Dendritic cell treated with granulocyte-macrophage colony-stimulating factor and Interleukin-4, amounts not matched to agents 40 ng/mL and 50 ng/mL, for 4 days (primary cell): ENCODE measurements at regions of chr11 and their contacts with region 1.

Region 1: DNA sequence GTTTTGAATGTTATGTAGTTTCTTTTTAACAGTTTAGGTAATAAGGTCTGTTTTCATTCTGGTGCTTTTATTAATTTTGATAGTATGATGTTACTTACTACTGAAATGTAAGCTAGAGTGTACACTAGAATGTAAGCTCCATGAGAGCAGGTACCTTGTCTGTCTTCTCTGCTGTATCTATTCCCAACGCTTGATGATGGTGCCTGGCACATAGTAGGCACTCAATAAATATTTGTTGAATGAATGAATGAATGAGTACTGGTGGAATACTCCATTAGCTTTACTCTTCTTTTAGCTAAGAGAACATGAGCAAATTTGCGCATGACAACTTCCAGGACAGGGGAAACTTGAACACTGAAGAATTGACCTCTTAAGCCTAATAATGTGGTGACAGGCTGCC is 6.6 kb upstream of the NAT10 start:
- H3K4me3 Mint-ChIP-seq: no peak overlapping the region
- H3K27ac Mint-ChIP-seq: no peak overlapping the region
- H3K4me1 Mint-ChIP-seq: peaks cover under 1% of the 10 kb centered on the region
- H3K27me3 Mint-ChIP-seq: no peaks in the 10 kb centered on the region

Region 2: GRCh38 chr11:34068111-34068510 is 30.7 kb before region 1 on chr11:
- intact Hi-C with region 1: loop called (anchors 5 kb)
- H3K4me3 Mint-ChIP-seq: no peak overlapping the region
- H3K27ac Mint-ChIP-seq: peak overlapping the region; percentile 65
- H3K4me1 Mint-ChIP-seq: peaks cover 30% of the 10 kb centered on the region
- H3K27me3 Mint-ChIP-seq: no peaks in the 10 kb centered on the region

Region 3: GRCh38 chr11:34111722-34112270 is 13.0 kb after region 1 on chr11:
- intact Hi-C with region 1: loop called (anchors 1 kb)
- H3K4me3 Mint-ChIP-seq: no peak overlapping the region
- H3K27ac Mint-ChIP-seq: no peak overlapping the region
- H3K4me1 Mint-ChIP-seq: peaks cover 9% of the 10 kb centered on the region
- H3K27me3 Mint-ChIP-seq: no peaks in the 10 kb centered on the region

Region 4: DNA sequence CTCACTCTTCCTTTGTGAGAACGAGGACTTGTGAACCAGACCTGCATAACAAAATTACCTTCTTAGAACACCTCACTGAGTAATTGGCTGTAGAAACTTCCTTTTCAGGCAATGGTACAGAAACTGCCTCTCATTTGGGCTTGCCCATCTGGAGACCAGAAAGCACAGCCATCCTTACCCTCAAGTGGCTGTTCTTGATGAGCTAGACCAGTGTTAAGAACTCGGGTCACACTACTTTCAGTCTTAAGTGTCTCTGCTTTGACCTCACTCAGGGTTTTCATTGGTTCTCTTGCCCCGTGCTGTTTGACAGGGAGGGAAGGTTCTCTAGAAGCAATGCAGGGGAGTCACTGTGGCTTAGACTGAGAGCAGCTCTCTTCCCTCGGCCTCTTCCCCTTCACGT is 36.0 kb after region 1 on chr11:
- intact Hi-C with region 1: loop called (anchors 5 kb)
- H3K4me3 Mint-ChIP-seq: no peak overlapping the region
- H3K27ac Mint-ChIP-seq: no peak overlapping the region
- H3K4me1 Mint-ChIP-seq: peaks cover 5% of the 10 kb centered on the region
- H3K27me3 Mint-ChIP-seq: no peaks in the 10 kb centered on the region

Region 5: DNA sequence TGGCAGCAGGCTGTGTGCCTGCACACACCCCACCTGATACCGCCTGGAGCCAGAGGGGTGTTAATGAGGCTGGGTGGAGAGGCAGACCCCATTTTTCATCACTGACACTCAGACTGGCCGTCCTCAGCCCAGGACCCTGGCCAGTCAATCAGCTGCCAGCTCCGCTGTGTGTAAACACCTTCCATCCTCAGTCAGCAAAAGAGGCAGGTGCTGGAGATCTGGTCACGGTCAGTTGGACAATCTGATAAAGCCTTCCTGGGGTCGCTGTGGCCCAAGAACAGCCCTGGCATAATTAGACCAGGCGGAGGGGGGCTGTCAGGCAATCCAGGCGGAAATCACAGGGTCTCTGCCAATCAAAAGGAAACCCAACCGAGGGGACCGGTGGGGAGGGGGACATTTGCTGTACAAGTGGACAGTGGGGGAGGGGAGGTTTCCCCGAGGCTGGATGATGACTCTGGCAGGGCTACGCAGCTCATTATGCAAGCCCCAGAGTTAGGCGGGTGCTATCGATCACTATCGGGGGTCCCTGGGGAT is 186.1 kb after region 1 on chr11:
- intact Hi-C with region 1: no loop called
- H3K4me3 Mint-ChIP-seq: no peak overlapping the region
- H3K27ac Mint-ChIP-seq: no peak overlapping the region
- H3K4me1 Mint-ChIP-seq: peaks cover 7% of the 10 kb centered on the region
- H3K27me3 Mint-ChIP-seq: no peaks in the 10 kb centered on the region

Region 6: GRCh38 chr11:34650528-34650927 is 551.7 kb after region 1 on chr11:
- intact Hi-C with region 1: no loop called
- H3K4me3 Mint-ChIP-seq: no peak overlapping the region
- H3K27ac Mint-ChIP-seq: peak overlapping the region; percentile 29
- H3K4me1 Mint-ChIP-seq: peaks cover 71% of the 10 kb centered on the region
- H3K27me3 Mint-ChIP-seq: no peaks in the 10 kb centered on the region